ENCODE measurements at regions of chr9 and their contacts with region 1.

Region 1: GRCh38 chr9:121445981-121446380 is 53.7 kb downstream of the GGTA1 start:
- DNase-seq: no peak
- H3K4me3 Mint-ChIP-seq: no peak overlapping the region
- H3K27ac Mint-ChIP-seq: no peak overlapping the region
- H3K4me1 Mint-ChIP-seq: peaks cover 10% of the 10 kb centered on the region
- H3K27me3 Mint-ChIP-seq: peaks cover 65% of the 10 kb centered on the region

Region 2: DNA sequence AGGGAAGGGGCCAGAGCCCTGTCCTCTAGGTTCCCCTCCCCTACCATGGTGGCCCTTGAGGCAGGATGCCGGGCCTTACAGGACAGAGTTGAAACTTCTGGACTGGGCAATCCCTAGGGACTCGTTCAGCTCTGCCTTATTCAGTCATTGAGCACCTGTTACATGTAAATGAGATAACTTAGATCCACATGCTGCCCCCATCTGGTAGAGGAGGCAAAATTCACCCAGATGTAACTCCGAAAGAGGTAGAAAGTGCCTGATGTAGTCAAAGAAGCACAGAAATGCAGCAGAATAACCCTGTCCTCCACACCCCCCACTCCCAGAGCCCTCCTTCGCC is 52.1 kb after region 1 on chr9:
- intact Hi-C with region 1: loop called (anchors 1 kb)
- DNase-seq: peak; percentile 24
- H3K4me3 Mint-ChIP-seq: no peak overlapping the region
- H3K27ac Mint-ChIP-seq: no peak overlapping the region
- H3K4me1 Mint-ChIP-seq: peaks cover 12% of the 10 kb centered on the region
- H3K27me3 Mint-ChIP-seq: peaks cover 52% of the 10 kb centered on the region